Right ventricle myocardium superior (tissue), 1 donor: ENCODE measurements at regions of chr7 and their contacts with region 1.

Region 1: GRCh38 chr7:909358-910329 is 33.3 kb downstream of the GET4 start:
- DNase-seq: peak; percentile 87
- ATAC-seq: peak; percentile 57

Region 2: DNA sequence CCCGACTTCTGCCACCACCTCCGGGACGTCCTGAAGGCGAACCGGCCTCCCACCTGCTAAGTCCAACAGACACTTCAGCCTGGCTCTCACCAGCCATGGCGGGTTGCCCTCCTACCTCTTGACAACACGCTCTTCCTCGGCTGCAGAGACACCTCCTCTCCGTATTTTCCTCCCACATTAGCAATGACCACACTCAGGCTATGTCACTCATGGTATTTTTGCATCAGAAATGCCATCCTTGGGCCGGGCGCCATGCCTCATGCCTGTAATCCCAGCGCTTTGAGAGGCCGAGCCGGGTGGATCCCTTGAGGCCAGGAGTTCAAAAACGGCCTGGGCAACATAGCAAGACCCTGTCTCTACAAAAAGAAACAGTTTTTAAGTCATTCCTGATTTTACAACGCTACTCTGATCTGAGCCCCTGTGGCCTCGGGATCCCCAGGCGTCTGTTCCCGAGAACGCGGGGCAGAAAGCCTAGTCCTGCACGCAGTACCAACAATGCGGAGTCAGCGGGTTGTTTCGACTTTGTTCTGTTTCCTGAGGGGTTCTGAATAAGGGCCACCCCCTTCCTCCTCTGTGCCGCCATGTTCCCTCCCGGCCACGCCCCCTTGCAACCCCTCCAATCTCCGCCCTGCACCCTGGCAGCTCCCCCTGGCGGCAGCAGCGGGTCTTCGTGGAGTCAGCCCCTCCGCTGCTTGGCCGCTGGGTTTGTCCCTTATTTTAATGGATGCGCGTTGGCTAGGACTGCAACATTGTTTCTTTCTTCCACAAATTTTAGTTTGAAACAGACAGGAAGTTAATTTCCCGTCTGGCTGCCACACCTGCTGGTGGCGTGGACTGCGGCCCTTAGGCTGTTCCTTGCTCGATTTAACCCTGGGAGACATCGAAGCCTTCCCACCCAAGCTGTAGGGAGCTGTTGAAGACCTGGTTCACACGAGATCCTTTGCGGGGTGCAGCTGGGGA is 260.0 kb after region 1 on chr7:
- intact Hi-C with region 1: loop called (anchors 5 kb)
- DNase-seq: peak; percentile 91
- ATAC-seq: peak; percentile 91

Region 3: DNA sequence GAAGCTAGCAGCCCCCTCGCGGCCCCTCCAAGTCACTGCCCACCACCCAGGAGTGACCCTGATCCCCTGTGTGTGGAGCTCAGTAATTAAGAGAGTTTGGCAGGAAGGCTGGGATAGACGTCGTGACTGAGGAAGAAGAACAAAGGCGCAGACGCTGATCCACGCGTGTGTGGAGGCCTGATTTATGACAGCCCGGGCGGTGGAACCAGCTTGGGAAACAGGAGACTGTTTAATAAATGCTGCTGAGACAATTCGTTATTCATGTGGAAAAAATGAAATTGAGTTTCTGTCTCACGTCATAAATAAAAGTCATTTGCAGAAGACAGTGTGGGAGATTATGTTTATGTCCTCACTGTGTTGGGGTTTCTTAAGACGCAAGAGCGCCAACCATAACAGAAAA is 891.3 kb after region 1 on chr7:
- intact Hi-C with region 1: no loop called
- DNase-seq: no peak
- ATAC-seq: no peak